H1 (cell line): ENCODE measurements at regions of chr2 and their contacts with region 1.

Region 1: DNA sequence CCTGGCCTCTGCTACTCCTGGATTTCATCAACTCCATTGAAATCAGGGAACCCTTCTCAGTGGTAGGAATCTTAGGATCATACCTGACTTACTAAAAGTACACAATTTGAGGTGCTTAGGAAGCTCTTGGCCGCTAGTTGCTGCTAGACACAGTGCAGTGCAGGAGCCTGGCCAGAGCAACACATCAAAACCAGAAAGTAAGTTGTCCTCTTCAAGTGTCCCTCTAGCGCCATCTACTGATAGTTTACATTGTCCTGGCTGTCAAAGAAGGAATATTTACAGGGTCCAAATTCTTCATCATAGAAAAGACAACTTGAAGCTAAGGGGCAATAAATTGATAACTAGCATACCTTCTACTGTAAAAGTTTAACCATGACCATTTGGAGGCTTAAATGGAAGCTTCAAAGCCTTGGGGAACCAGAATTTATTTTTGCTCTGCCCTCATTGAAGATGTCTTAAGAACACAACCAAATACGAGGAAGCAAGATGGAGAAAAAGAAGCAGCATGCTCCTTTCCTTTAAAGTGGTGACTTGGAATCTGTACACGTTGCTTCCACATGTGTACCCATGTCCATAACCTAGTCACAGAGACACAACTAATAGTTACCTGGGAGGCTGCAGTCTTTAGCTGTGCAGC is 889.1 kb upstream of the GCFC2 start:
- DNase-seq: peak in 1 of 2 experiments; percentile 71
- H3K4me3 ChIP-seq: no peak overlapping the region
- H3K27ac ChIP-seq: no peak overlapping the region
- H3K4me1 ChIP-seq: peaks cover 0 to 2% (median 0%) of the 10 kb centered on the region in 4 experiments; a peak in 2 of 7 replicates
- H3K27me3 ChIP-seq: no peaks in the 10 kb centered on the region
- CTCF ChIP-seq: peak; percentile 53 to 98 (median 95)
- EP300 ChIP-seq: no peak
- POLR2A ChIP-seq: no peak
- RAD21 ChIP-seq: peak; percentile 98 to 99

Region 2: DNA sequence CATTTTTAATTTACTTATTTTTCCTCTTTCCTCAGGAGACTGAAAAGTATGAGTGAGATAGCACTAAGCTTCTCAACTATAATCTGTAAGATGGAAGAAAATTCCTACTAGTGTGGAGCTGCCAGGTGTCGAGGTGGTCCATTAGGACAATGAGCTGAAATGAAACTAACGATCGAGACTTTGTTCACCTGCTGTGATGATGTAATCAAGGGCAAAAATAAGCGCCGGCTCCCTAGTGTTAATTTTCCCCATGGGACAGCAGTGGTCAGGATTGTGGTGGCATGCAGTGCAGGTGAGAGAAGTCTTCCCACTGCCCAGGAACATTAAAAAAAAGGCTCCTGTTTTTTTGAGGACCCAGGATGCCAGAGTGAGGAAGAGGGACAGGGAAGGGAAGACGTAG is 30.0 kb before region 1 on chr2:
- CTCF ChIA-PET with region 1: interaction called, 10 read pairs
- POLR2A ChIA-PET with region 1: no interaction called
- DNase-seq: no peak
- H3K4me3 ChIP-seq: no peak overlapping the region
- H3K27ac ChIP-seq: no peak overlapping the region
- H3K4me1 ChIP-seq: peaks cover 0 to 16% (median 3%) of the 10 kb centered on the region in 4 experiments; a peak in 4 of 7 replicates
- H3K27me3 ChIP-seq: no peaks in the 10 kb centered on the region
- CTCF ChIP-seq: no peak
- EP300 ChIP-seq: no peak
- POLR2A ChIP-seq: no peak
- RAD21 ChIP-seq: no peak

Region 3: DNA sequence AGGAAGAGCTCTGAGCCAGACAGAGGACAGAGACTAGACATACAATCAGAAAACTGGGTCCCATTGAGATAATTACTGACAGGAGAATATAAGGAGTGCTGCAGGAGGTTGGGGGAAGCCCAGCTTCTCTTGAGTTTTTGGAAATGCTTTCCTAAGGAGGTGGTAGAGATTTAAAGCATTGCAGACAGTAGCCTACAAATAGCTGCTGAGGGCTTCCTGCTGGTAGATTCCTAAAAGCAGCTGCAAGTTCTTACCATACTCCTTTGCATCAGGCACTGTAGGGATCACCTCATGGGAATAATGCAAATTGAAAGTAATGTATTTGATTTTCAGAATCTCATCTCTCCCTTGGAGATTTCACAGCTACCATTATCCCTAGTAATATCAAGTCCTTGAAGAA is 13.5 kb after region 1 on chr2:
- CTCF ChIA-PET with region 1: interaction called, 13 read pairs
- POLR2A ChIA-PET with region 1: no interaction called
- DNase-seq: no peak
- H3K4me3 ChIP-seq: no peak overlapping the region
- H3K27ac ChIP-seq: no peak overlapping the region
- H3K4me1 ChIP-seq: peaks cover 2 to 8% (median 5%) of the 10 kb centered on the region in 4 experiments; a peak in 6 of 7 replicates
- H3K27me3 ChIP-seq: no peaks in the 10 kb centered on the region
- CTCF ChIP-seq: no peak
- EP300 ChIP-seq: no peak
- POLR2A ChIP-seq: no peak
- RAD21 ChIP-seq: peak in 1 of 2 experiments; percentile 5; a peak in 1 of 4 replicates

Region 4: GRCh38 chr2:76625101-76625500 is 25.3 kb after region 1 on chr2:
- CTCF ChIA-PET with region 1: interaction called, 10 read pairs
- POLR2A ChIA-PET with region 1: no interaction called
- DNase-seq: no peak
- H3K4me3 ChIP-seq: no peak overlapping the region
- H3K27ac ChIP-seq: no peak overlapping the region
- H3K4me1 ChIP-seq: peaks cover 0 to 6% (median under 1%) of the 10 kb centered on the region in 4 experiments; a peak in 1 of 7 replicates
- H3K27me3 ChIP-seq: no peaks in the 10 kb centered on the region
- CTCF ChIP-seq: no peak
- EP300 ChIP-seq: no peak
- POLR2A ChIP-seq: no peak
- RAD21 ChIP-seq: no peak